G401 (cell line): ENCODE measurements at regions of chr2 and their contacts with region 1.

Region 1: DNA sequence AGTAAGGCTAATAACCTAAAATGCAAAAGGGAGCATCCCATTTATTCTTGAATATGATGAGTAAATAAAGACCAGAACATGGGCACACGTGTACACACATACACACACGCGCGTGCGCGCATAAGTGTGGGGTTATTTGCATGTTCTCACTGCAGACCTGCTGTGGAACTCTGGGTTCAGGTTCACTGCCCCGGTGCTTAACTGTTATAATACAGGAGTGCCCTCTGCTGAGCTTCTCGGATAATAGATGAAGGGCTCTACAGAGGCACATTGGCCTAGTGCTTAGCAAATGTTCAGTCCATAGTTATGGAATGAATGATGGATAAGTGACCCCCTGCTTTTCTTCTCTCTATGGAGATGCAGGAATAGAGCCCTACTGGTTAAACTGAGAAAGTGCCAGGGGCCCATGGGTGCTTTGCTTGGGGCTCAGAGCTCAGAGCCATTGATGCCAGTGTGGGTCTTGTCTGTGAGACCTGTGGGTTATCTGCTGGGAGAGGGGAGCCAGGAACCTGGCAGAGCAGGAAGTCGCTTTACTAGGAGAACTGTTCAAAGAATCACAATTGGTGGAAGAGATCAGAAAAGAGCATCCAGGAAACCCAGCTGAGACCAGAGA is 3.6 kb upstream of the ARL4C start:
- DNase-seq: peak; percentile 88

Region 2: GRCh38 chr2:234158812-234159211 is 341.7 kb before region 1 on chr2:
- in situ Hi-C with region 1: loop called (anchors 10 kb)
- DNase-seq: no peak

Region 3: DNA sequence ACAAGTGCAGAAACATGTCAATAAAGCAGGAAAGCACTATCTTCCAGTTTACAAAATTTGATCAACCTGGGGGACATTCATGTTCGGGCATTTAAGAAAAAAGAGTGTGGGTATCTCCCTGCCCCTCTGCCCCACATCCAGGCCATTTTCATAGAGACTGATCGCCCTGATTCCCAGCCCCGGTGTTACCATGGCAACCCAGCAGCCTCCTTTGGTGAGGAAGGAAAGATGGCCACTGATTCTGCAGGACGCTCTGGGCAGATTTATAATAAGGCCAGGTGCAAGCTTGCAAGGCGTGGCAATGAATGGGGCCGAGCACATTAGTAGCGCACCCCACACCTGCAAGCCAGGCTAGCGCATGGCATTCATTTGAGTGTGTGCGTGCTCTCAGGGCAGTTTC is 33.1 kb after region 1 on chr2:
- in situ Hi-C with region 1: no loop called
- DNase-seq: no peak